ENCODE measurements at regions of chr16 and their contacts with region 1.

Region 1: DNA sequence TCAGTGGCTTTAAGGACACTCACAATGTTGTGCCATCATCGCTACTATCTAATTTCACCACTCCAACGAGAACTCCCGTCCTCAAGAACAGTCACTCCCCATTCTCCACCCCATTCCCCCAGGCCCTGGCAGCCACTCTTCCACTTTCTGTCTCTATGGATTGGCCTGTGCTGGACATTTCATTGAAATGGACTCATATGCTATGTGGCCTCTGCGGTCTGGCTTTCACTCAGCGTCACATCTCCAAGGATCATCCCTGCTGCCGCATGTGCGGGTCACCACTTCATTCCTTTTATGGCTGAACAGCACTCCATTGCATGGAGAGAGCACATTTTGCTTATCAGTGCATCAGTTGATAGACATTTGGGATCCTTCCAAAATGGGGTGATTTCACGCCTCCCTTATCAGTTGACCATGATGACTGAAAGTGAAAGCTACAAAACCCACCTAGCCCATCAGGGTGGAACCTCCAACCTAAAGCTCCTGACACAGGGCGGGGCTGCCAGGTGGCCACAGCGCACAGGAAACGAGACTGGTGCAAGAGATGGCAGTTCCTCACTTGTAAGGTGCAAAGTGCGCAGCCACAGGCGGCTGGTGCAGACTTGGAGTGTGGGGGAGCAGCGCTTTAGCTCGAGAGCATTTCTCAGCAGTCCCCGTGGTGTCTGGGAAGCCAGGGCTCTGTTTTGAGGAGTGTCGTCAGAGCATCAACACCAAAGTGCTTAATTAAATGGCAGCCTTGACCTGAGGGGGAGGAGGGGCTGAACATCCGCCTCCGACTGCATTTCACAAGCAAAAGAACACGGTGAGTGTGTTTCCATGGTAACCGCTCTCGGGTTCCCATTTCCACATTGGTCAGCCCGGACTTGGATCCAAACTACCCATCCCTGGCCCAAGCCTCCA is 23.8 kb downstream of the COTL1 start:
- DNase-seq: no peak
- H3K4me3 ChIP-seq: no peak overlapping the region
- H3K27ac ChIP-seq: no peak overlapping the region
- H3K4me1 ChIP-seq: no peaks in the 10 kb centered on the region
- H3K27me3 ChIP-seq: no peaks in the 10 kb centered on the region
- CTCF ChIP-seq: no peak

Region 2: DNA sequence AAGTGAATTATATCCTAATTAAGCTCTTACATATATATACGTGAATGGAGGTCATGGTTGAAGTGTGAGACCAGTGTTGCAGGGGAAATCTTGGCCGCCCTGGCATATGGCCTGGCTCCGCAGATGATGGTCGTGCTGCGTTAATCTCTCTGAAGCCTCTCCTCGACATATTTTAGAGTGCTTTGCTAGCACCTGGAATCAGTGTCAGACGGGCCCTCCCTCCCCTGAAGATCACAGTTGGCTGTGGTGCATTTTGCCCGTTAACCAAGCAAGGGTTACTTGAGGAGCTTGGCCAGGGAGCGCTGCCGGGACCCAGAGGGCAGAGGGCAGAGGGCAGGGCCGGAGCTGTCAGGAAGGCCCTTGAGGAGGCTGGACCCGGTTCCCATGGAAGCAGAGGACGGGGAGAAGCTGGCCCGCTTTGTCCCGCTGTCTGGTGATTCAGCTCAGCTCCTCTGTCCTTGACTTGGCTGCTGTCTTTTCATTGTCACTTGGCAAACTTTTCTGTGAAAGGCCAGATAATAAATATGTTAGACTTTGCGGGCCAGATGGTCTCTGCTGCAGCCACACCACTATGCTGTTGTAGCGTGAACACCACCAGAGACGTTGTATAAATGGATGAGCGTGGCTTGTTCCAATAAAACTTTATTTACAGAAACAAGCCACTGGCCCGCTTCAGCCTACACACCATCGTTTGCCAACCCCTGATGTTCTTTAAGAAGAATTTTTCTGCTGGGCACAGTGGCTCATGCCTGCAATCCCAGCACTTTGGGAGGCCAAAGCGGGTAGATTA is 485.9 kb after region 1 on chr16:
- CTCF ChIA-PET with region 1: no interaction called
- POLR2A ChIA-PET with region 1: interaction called, 10 read pairs
- intact Hi-C with region 1: no loop called
- DNase-seq: no peak
- H3K4me3 ChIP-seq: no peak overlapping the region
- H3K27ac ChIP-seq: no peak overlapping the region
- H3K4me1 ChIP-seq: no peaks in the 10 kb centered on the region
- H3K27me3 ChIP-seq: no peaks in the 10 kb centered on the region
- CTCF ChIP-seq: no peak